PC-3 (cell line): ENCODE measurements at regions of chr12 and their contacts with region 1.

Region 1: DNA sequence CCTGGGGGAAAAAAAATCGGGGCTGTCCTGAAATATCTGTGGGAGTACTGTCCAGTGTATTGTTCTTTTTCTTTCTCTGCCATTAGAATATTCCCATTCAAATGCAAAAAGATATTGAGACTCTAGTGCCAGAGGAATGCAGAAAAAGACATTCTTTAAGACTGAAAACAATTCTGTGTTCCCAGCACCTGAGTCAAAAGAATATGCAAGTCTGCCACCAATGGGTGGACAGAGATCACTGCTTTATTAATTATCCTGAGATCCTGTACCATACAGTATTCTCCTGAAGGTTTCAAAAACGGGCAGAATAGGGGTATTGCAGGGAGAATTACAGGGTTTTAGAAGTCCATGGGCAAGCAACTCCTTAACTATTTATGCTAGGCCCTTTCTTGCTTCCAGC is 361.8 kb downstream of the C12orf50 start:
- DNase-seq: peak; percentile 61
- ATAC-seq: peak; percentile 96
- H3K4me3 ChIP-seq: no peak overlapping the region
- H3K27ac ChIP-seq: no peak overlapping the region
- H3K4me1 ChIP-seq: no peaks in the 10 kb centered on the region
- H3K27me3 ChIP-seq: no peaks in the 10 kb centered on the region
- CTCF ChIP-seq: peak; percentile 70

Region 2: GRCh38 chr12:86735851-86736250 is 931.5 kb before region 1 on chr12:
- CTCF ChIA-PET with region 1: no interaction called
- POLR2A ChIA-PET with region 1: no interaction called
- intact Hi-C with region 1: loop called (anchors 1 kb)
- DNase-seq: no peak
- ATAC-seq: no peak
- H3K4me3 ChIP-seq: no peak overlapping the region
- H3K27ac ChIP-seq: no peak overlapping the region
- H3K4me1 ChIP-seq: no peaks in the 10 kb centered on the region
- H3K27me3 ChIP-seq: no peaks in the 10 kb centered on the region
- CTCF ChIP-seq: no peak

Region 3: DNA sequence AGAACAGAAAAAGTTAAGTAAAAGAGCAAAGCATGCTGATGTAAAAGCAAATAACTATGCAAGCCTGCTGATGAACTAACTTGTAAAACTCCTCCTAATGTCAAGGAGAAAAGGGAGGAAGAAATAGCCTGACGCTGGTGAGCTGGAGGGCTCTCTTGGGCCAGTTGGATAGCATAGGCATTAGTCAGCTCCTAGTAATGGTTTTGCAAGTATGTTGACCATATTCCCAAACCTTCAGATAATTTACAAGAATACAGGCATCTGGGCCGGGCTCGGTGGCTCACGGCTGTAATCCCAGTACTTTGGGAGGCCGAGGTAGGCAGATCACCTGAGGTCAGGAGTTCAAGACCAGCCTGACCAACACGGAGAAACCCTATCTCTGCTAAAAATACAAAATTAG is 509.6 kb before region 1 on chr12:
- CTCF ChIA-PET with region 1: no interaction called
- POLR2A ChIA-PET with region 1: no interaction called
- intact Hi-C with region 1: loop called (anchors 5 kb)
- DNase-seq: peak; percentile 95
- ATAC-seq: peak; percentile 78
- H3K4me3 ChIP-seq: no peak overlapping the region
- H3K27ac ChIP-seq: peak overlapping the region; percentile 67
- H3K4me1 ChIP-seq: peaks cover 30% of the 10 kb centered on the region
- H3K27me3 ChIP-seq: no peaks in the 10 kb centered on the region
- CTCF ChIP-seq: no peak

Region 4: DNA sequence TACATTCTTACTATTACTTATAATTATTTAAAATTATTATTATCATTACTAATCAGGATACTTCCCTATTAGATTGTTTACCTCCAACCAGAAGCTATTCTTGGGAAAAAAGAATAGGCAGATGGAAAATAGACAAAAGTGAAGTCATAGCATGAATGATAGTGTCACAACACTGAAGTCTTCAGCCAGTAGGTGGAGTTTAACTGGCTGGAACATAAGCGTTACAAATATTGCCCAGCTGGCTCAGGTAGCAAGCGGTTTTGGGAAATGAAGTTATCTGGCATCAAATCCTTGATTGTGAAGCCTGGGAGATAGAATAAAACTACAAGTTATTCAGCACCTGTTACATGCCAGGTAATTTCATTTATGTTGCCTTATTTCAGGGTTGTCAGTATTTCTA is 401.1 kb before region 1 on chr12:
- CTCF ChIA-PET with region 1: no interaction called
- POLR2A ChIA-PET with region 1: no interaction called
- intact Hi-C with region 1: loop called (anchors 5 kb)
- DNase-seq: peak; percentile 44
- ATAC-seq: no peak; the same call in 1 of the 2 replicates
- H3K4me3 ChIP-seq: no peak overlapping the region
- H3K27ac ChIP-seq: no peak overlapping the region
- H3K4me1 ChIP-seq: peaks cover 7% of the 10 kb centered on the region
- H3K27me3 ChIP-seq: no peaks in the 10 kb centered on the region
- CTCF ChIP-seq: peak; percentile 55

Region 5: GRCh38 chr12:87690236-87690810 is 22.9 kb after region 1 on chr12:
- CTCF ChIA-PET with region 1: no interaction called
- POLR2A ChIA-PET with region 1: no interaction called
- intact Hi-C with region 1: no loop called
- DNase-seq: peak; percentile 44
- ATAC-seq: no peak
- H3K4me3 ChIP-seq: no peak overlapping the region
- H3K27ac ChIP-seq: no peak overlapping the region
- H3K4me1 ChIP-seq: no peaks in the 10 kb centered on the region
- H3K27me3 ChIP-seq: no peaks in the 10 kb centered on the region
- CTCF ChIP-seq: no peak

Region 6: DNA sequence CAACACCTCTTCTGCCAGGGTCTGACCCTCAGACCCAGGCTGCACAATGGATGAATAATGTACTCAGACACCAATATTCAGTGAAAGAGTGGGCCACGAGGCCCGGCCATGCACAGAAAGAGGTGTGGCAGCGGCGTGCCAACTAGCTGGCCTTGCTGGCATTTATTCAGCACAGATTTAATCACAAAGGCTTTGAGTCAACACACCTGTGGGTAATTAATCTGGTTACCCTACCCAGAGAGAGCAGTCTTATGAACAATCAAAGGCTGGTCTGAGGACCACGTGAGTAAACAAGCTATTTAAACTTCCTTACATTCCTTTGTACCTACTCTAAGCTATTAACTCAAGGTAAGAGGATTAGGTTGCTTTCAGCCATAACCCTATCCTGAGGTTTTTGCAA is 37.0 kb after region 1 on chr12:
- CTCF ChIA-PET with region 1: no interaction called
- POLR2A ChIA-PET with region 1: no interaction called
- intact Hi-C with region 1: no loop called
- DNase-seq: peak; percentile 73
- ATAC-seq: peak; percentile 92
- H3K4me3 ChIP-seq: no peak overlapping the region
- H3K27ac ChIP-seq: no peak overlapping the region
- H3K4me1 ChIP-seq: 0 out of 2 replicates have a peak, but pooled peaks cover 6% of the 10 kb centered on the region
- H3K27me3 ChIP-seq: no peaks in the 10 kb centered on the region
- CTCF ChIP-seq: no peak

Region 7: DNA sequence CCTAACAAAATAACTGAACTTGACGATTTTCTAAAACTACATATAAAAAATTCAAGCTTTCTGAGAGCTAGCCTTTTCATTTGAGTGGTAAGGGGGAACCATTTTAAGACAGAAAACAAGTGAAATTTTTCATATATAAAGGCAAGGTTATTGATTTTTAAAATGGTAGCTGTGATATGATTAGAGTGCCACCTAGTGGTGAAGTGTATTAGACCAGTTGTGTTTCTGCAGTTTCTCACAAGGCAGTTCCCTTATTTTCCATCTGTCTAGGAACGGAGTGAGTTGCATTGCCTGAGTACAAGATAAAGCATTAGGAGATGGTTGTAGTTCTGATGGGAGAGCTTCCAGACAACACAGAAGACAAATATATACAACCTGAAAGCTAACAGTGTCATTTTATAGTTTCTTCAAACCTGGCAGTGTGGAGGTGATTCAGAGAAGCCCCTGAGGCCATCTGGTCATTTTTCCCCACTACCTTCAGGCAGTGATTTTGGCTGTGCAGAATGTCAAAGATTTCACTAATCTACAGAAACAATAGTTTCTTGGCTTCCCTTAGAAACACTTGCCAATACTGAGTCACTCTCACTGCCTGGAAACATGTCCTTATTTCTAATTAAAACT is 181.0 kb after region 1 on chr12:
- CTCF ChIA-PET with region 1: no interaction called
- POLR2A ChIA-PET with region 1: no interaction called
- intact Hi-C with region 1: loop called (anchors 5 kb)
- DNase-seq: peak; percentile 78
- ATAC-seq: peak; percentile 60
- H3K4me3 ChIP-seq: no peak overlapping the region
- H3K27ac ChIP-seq: no peak overlapping the region
- H3K4me1 ChIP-seq: no peaks in the 10 kb centered on the region
- H3K27me3 ChIP-seq: no peaks in the 10 kb centered on the region
- CTCF ChIP-seq: peak; percentile 93

Region 8: DNA sequence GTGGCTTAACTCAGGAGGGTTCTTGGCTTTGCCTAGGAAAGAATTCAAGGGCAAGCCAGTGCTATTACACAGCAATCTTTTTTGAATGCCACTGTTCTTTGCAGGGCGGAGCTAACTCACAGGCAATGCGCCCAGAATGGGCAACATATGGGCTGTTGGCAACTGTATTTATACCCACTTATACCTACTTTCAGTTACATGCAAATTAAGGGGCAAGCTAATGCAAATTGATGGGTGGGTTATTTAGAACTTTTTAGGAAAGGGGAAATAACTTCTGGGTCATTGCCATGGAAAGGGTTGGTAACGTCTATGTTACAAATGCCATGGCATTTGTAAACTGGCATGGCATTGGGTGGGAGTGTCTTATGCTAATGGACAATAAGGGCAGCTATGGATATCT is 276.4 kb after region 1 on chr12:
- CTCF ChIA-PET with region 1: no interaction called
- POLR2A ChIA-PET with region 1: no interaction called
- intact Hi-C with region 1: no loop called
- DNase-seq: no peak
- ATAC-seq: no peak
- H3K4me3 ChIP-seq: no peak overlapping the region
- H3K27ac ChIP-seq: no peak overlapping the region
- H3K4me1 ChIP-seq: no peaks in the 10 kb centered on the region
- H3K27me3 ChIP-seq: no peaks in the 10 kb centered on the region
- CTCF ChIP-seq: no peak